ENCODE measurements at regions of chr1 and their contacts with region 1.

Region 1: DNA sequence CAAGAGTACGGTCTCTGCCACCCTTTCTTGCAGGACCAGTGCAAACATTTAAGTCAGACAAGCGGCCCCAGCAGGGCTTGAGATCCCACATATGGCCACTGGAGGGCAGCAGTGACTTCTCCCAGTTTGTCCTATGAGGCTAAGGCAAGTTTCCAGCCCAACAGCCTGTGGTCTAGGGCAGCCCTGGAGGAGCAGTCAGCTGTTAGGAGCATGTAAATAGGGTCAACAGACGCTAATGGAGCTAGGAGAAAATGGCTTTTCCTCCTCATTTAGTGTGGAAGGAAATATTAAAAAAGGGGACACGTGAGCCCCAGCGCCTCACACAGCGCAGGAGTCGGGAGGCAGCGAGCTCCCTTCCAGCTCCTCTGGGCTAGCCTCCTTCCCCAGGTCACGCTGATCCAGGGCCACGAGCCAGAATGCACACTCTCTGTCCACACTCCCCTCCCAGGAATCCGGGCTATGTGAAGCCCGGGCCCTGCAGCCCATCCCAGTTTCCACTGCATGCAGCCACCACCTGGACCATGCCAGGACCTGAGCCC is 95.6 kb downstream of the LAMC2 start:
- ATAC-seq: peak; percentile 72 to 93 (median 83)
- H3K4me3 ChIP-seq: no peak overlapping the region
- H3K27ac ChIP-seq: no peak overlapping the region
- H3K4me1 ChIP-seq: peaks cover 11 to 15% of the 10 kb centered on the region in 2 donors

Region 2: GRCh38 chr1:183394435-183394834 is 112.8 kb after region 1 on chr1:
- in situ Hi-C with region 1: no loop called
- ATAC-seq: no peak
- H3K4me3 ChIP-seq: no peak overlapping the region
- H3K27ac ChIP-seq: no peak overlapping the region
- H3K4me1 ChIP-seq: no peaks in the 10 kb centered on the region

Region 3: DNA sequence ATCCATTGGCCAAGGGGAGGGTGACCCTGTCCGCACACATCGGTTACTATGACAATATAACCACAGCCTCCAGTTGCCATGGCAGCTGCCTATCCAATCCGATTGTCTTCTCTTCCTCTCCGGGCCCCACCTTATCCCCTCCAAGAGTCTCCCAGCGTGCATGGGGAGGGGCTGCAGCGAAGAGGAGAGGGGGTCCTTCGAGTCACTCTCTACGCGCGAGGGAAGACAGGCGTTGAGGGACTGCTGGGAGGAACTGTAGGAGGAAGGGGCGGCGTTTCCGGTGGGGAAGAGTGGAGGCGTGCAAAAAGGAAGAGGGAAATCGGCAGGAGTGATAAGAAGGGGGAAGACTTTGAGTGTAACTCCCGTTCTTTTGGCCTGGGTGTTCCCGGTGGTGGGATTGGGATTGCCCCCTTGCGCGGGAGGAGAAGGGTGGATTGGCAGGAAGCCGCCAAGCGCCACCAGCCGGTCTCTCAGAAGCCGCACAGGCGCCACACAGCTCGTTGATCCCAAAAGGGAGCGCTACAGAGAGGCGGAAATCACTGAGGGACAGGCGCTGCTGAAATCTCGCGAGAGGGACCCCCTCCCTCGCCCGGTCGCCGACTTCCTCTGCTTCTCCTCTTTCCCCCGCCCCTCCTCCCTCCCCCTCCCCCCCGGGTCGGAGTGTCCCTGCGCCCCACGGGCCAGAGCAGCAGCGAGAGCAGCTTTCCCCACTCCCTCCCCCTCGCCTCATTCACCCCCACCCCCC is 190.3 kb after region 1 on chr1:
- in situ Hi-C with region 1: loop called in 1 of 9 experiments (anchors 25 kb)
- ATAC-seq: peak; percentile 58 to 85 (median 81)
- H3K4me3 ChIP-seq: peak overlapping the region; percentile 58 to 92 (median 77)
- H3K27ac ChIP-seq: peak overlapping the region; percentile 99
- H3K4me1 ChIP-seq: peaks cover 5 to 11% of the 10 kb centered on the region in 2 donors

Region 4: GRCh38 chr1:183543619-183544204 is 262.1 kb after region 1 on chr1:
- in situ Hi-C with region 1: loop called in 2 of 9 experiments (anchors 10 to 25 kb)
- ATAC-seq: peak; percentile 70 to 99 (median 79)
- H3K4me3 ChIP-seq: no peak overlapping the region
- H3K27ac ChIP-seq: no peak overlapping the region
- H3K4me1 ChIP-seq: peaks cover 0 to 4% of the 10 kb centered on the region in 2 donors

Region 5: DNA sequence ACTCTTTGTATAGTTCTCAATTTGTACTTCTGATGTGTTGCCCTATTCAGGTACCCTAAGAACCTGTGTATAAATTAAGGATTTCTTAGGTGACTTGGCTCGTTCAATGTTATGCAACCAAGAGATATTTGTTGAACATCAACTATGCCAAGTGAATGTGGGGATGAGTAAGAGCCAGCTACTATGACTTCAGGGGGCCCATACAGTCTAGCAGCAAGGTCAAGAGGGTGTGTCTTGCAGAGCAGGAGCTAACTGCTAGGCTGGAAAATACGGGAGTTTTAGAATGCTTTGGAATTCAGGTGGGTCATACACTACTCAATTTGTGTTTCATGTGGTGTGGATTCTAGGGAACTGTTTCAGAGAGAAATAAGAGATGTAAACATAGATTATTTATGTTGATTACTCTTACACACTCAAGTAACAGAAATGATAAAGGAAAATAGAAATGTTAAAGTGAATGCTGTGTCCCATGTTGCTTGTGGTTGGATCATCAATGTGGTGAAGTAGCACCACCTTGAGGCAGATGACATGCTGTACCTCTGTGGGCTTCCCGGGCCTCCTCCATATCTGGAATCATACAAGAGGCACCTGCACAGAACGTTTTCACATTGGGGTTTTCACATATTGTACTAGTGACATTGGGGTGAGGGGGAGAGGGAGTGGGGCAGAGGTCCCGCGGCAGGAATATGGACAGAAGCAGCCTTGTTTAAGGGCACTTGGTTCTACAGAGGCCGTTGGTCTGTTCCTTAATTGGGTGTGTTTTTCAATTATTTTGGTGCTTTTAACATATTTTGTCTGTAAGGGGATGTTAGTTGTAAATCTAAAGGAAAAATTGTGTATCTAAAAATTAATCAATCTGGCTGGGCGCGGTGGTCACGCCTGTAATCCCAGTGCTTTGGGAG is 341.5 kb after region 1 on chr1:
- in situ Hi-C with region 1: loop called in 1 of 9 experiments (anchors 25 kb)
- ATAC-seq: peak; percentile 78 to 99 (median 94)
- H3K4me3 ChIP-seq: no peak overlapping the region
- H3K27ac ChIP-seq: no peak overlapping the region
- H3K4me1 ChIP-seq: no peaks in the 10 kb centered on the region

Measured in motor neuron (in vitro differentiated cells).